ENCODE measurements at regions of chr10 and their contacts with region 1.

Region 1: DNA sequence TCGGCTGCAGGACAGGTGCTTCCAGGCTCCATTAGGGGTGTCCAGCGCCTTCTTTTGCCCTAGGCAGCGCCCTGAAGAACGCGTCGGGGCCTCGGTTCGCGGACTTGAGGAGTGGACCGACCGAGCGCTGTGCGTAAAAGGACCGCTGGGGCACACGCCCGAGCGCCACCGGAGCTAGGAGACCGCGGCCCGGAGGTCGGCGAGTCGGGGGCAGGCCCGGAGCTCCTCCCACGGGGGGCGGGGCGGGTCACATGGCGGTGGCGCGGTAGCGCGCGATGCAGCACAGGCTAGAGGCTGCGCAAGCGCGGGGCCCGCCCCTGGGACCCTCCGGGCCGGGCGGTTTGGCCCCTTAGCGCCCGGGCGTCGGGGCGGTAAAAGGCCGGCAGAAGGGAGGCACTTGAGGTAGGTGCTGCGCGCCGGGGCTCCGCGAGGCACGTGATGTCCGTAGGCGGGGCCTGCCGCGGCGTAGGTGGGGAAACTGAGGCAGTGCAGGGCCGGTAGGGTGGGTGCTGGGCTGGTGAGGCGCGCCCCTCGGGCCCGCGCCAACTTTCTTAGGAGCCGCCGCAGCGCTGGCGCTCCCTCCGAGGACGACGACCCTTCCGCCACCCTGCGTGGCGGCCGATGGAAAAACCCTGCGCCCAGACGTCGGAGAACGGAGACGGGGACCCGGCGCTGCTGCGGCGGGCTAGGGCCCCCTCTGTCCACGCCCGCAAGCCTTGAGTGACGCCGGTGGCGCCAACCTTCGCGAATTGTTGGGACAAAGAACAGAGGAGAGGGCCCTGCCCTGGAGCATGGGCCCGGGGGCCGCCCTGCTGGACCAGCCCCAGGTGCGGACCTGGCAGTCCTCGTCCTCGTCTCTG is at the start of gene PRXL2A:
- DNase-seq: no peak
- ATAC-seq: peak; percentile 97
- H3K4me3 ChIP-seq: peak within 1 kb of the TSS; percentile 77
- H3K27ac ChIP-seq: no peak within 1 kb of the TSS
- H3K4me1 ChIP-seq: no peaks in the 10 kb centered on the region; the same call in 1 of the 2 replicates
- H3K27me3 ChIP-seq: peaks cover 0 to 3% of the 10 kb centered on the region in 2 experiments; a peak in 2 of 4 replicates
- CTCF ChIP-seq: no peak
- EP300 ChIP-seq: no peak
- POLR2A ChIP-seq: peak; percentile 72
- RAD21 ChIP-seq: no peak
- polyA plus RNA-seq, gene PRXL2A: 5.1 to 10.0 TPM

Region 2: GRCh38 chr10:80421707-80422536 is 13.4 kb after region 1 on chr10:
- CTCF ChIA-PET with region 1: interaction called, 6 read pairs
- POLR2A ChIA-PET with region 1: interaction called, 10 read pairs
- RAD21 ChIA-PET with region 1: interaction called, 22 read pairs
- SMC1A ChIA-PET with region 1: interaction called, 8 read pairs
- in situ Hi-C with region 1: no loop called
- intact Hi-C with region 1: no loop called
- DNase-seq: peak; percentile 40
- ATAC-seq: peak; percentile 92
- H3K4me3 ChIP-seq: peak overlapping the region; percentile 23; the same call in 1 of the 2 replicates
- H3K27ac ChIP-seq: peak overlapping the region; percentile 47
- H3K4me1 ChIP-seq: peaks cover 21% of the 10 kb centered on the region
- H3K27me3 ChIP-seq: no peaks in the 10 kb centered on the region
- CTCF ChIP-seq: no peak
- EP300 ChIP-seq: no peak
- POLR2A ChIP-seq: no peak
- RAD21 ChIP-seq: no peak